K562 (cell line): ENCODE measurements at regions of chr6 and their contacts with region 1.

Region 1: DNA sequence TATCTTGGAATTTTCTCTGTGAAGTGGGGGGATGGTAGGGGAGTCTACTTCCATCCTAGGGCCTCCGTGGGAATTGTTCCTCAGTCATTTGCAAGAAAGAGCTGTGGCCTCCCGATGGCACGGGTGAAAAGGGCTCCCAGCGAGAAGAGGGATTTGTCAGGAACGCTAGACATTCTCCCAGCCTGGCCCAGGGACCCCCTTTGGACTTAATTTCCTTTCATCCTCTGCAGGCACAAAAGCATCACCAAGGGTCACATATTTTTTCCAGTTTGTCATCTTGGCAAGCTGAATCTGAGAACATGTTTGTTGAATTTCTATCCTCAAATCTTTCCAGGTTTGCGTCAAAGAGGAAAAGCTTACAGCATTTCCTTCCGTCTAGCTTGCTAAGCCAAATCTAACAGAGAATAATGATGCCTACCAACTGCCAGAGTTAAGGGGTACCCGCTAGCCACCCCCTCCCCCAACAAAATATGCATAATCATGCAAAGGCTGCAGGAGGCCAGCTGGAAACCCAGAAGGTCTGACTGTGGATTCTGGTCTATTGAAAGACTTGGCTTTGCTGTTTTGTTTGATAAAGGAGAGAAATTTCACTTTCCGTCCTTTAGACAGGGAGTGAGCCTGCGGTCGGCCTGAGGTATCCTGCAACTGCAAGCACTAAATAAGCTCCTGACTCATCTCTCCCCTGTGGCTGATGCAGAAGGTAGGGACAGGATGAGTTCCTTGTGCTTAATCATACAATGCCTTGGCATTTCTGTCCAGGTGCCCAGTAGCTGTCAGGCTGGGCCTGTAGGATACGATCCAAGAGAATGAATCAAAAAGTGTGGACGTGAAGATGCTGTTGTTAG is 23.1 kb downstream of the PSMG4 start:
- DNase-seq: no peak
- ATAC-seq: no peak
- H3K4me3 ChIP-seq: no peak overlapping the region
- H3K27ac ChIP-seq: no peak overlapping the region
- H3K4me1 ChIP-seq: peaks cover 0 to 30% of the 10 kb centered on the region in 2 experiments; a peak in 2 of 5 replicates
- H3K27me3 ChIP-seq: no peaks in the 10 kb centered on the region
- CTCF ChIP-seq: no peak
- EP300 ChIP-seq: no peak
- POLR2A ChIP-seq: no peak
- RAD21 ChIP-seq: no peak

Region 2: DNA sequence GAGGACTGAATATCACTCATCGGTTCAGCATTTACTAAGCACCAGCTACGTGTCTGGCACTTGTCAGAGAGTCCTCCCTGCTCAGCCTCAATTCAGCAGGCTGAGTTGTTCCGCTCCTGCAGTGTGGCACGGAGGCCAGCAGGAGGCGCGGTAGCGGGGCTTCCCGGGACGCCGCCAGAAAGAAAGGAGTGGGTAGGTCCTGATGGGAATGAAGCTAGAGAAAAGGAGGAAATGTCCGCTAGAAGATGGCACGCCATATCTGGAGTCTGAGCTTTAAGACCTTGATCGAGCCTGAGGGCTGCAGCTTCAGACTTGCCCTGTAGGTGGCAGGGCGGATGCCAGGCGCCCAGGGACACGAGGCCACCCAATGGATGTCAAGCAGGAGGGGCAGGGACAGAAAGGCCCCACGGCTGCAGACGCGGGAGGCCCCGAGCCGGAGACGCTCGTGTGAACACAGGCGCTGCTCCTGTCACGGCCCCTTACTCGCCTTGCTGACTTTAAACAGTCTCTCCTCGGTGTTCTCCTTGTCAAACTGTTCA is 329.2 kb before region 1 on chr6:
- CTCF ChIA-PET with region 1: no interaction called
- POLR2A ChIA-PET with region 1: no interaction called
- in situ Hi-C with region 1: no loop called
- intact Hi-C with region 1: no loop called
- DNase-seq: peak; percentile 74 to 80 (median 78)
- ATAC-seq: peak; percentile 89
- H3K4me3 ChIP-seq: no peak overlapping the region
- H3K27ac ChIP-seq: peak overlapping the region; percentile 17; the same call in 1 of the 3 replicates
- H3K4me1 ChIP-seq: peaks cover 25 to 26% of the 10 kb centered on the region in 2 experiments
- H3K27me3 ChIP-seq: no peaks in the 10 kb centered on the region
- CTCF ChIP-seq: peak; percentile 98 to 100 (median 99)
- EP300 ChIP-seq: no peak
- POLR2A ChIP-seq: no peak
- RAD21 ChIP-seq: peak; percentile 90 to 96

Region 3: GRCh38 chr6:3456755-3457466 is 175.1 kb after region 1 on chr6 and contains the start of gene SLC22A23:
- CTCF ChIA-PET with region 1: interaction called, 8 read pairs
- POLR2A ChIA-PET with region 1: interaction called, 5 read pairs
- in situ Hi-C with region 1: no loop called
- intact Hi-C with region 1: loop called (anchors 1 kb)
- DNase-seq: peak; percentile 86 to 99 (median 98)
- ATAC-seq: peak; percentile 80
- H3K4me3 ChIP-seq: peak within 1 kb of the TSS; percentile 50
- H3K27ac ChIP-seq: no peak within 1 kb of the TSS; the same call in 1 of the 3 replicates
- H3K4me1 ChIP-seq: peaks cover 24 to 45% of the 10 kb centered on the region in 2 experiments
- H3K27me3 ChIP-seq: 0 out of 5 replicates have a peak, but pooled peaks cover 0 to 7% of the 10 kb centered on the region in 2 experiments
- CTCF ChIP-seq: peak; percentile 57 to 83 (median 64); a peak in 5 of 6 replicates
- EP300 ChIP-seq: no peak
- POLR2A ChIP-seq: no peak
- RAD21 ChIP-seq: peak in 1 of 2 experiments; percentile 55; a peak in 3 of 4 replicates
- polyA plus RNA-seq, gene SLC22A23: 0.30 to 0.32 TPM

Region 4: DNA sequence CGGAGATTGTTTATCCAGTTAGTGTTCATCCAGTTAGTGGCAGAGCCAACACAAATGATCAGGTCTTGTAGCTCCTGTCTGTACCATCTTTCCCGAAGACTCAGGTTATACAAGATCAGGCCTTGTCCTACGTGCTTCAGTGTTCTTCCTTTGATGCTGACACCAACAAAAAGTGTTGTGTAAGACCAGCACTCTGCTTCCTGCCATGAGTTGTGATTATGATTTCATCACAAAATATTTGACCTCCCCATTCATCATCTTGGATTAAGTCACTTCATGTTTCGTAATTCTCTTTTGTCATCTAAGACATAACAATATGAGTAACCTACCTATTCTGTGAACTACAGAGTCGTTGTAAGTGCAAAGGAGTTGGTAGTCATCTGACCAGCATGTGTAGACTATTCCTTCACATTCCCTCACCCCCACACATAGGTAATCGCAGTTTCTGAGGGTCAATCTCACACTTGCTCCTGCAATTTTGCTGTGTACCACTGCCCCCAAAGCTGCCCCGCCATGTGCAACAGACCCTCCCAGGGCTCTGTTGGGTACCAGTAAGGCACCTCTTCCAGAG is 310.6 kb after region 1 on chr6:
- CTCF ChIA-PET with region 1: no interaction called
- POLR2A ChIA-PET with region 1: no interaction called
- in situ Hi-C with region 1: loop called (anchors 10 kb)
- intact Hi-C with region 1: no loop called
- DNase-seq: peak in 1 of 4 experiments; percentile 7
- ATAC-seq: no peak
- H3K4me3 ChIP-seq: no peak overlapping the region
- H3K27ac ChIP-seq: no peak overlapping the region
- H3K4me1 ChIP-seq: no peaks in the 10 kb centered on the region
- H3K27me3 ChIP-seq: peaks cover 34 to 48% of the 10 kb centered on the region in 2 experiments
- CTCF ChIP-seq: no peak
- EP300 ChIP-seq: no peak
- POLR2A ChIP-seq: no peak
- RAD21 ChIP-seq: no peak

Region 5: GRCh38 chr6:3732345-3733141 is 450.7 kb after region 1 on chr6:
- CTCF ChIA-PET with region 1: interaction called, 53 read pairs
- POLR2A ChIA-PET with region 1: interaction called, 4 read pairs
- in situ Hi-C with region 1: no loop called
- intact Hi-C with region 1: loop called (anchors 1 kb)
- DNase-seq: peak; percentile 77 to 87 (median 84)
- ATAC-seq: peak; percentile 96
- H3K4me3 ChIP-seq: no peak overlapping the region
- H3K27ac ChIP-seq: no peak overlapping the region
- H3K4me1 ChIP-seq: peaks cover 0 to 3% of the 10 kb centered on the region in 2 experiments; a peak in 1 of 5 replicates
- H3K27me3 ChIP-seq: peaks cover 49 to 81% of the 10 kb centered on the region in 2 experiments
- CTCF ChIP-seq: peak; percentile 94 to 96 (median 95)
- EP300 ChIP-seq: no peak
- POLR2A ChIP-seq: no peak
- RAD21 ChIP-seq: peak; percentile 98 to 99

Region 6: GRCh38 chr6:3990692-3991501 is 709.0 kb after region 1 on chr6:
- CTCF ChIA-PET with region 1: interaction called, 12 read pairs
- POLR2A ChIA-PET with region 1: no interaction called
- in situ Hi-C with region 1: no loop called
- intact Hi-C with region 1: no loop called
- DNase-seq: peak; percentile 82 to 88 (median 86)
- ATAC-seq: peak; percentile 99
- H3K4me3 ChIP-seq: no peak overlapping the region
- H3K27ac ChIP-seq: no peak overlapping the region
- H3K4me1 ChIP-seq: no peaks in the 10 kb centered on the region; a peak in 1 of 5 replicates
- H3K27me3 ChIP-seq: no peaks in the 10 kb centered on the region
- CTCF ChIP-seq: peak; percentile 89 to 96 (median 94)
- EP300 ChIP-seq: no peak
- POLR2A ChIP-seq: no peak
- RAD21 ChIP-seq: peak; percentile 70 to 87